ENCODE measurements at regions of chr19 and their contacts with region 1.

Region 1: DNA sequence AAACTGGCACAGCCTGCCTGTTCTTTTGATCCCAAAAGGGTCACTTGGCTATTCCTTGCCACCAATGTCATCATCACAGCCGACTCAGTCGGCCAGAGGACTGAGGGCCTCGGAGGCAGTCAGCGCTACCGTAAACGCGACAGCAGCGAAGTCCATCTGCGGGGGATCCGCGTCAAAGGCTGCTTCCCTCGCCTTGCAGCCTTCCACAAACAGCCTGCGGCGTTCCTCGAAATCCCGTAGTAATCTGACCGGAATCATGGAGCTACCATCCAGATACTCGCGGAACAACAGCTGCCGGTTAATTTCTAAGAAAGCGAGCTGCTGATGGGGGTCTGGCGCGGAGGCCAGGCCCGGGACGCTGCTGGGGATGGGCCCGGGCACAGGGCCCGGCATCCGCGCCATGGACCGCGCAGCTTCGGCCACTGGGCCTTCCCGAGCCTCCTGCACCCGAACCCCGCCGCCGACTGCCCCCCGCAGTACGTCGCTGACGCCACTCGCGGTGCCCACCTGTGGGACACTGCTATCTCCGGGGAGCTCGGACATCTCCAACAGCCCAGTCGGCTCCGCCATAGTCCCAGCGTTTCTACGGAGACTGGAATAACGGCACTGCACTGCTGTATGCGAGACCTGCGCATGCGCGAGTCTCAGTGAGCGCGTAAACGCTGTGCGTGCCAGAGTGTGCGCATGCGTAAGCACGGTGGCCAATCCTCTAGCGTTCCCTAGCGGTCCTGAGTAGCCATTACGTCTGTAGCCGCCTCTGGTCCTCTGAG is at the start of gene EID2B:
- DNase-seq: peak; percentile 93 to 95
- H3K4me3 ChIP-seq: peak within 1 kb of the TSS; percentile 72
- H3K4me3 Mint-ChIP-seq: peak within 1 kb of the TSS; percentile 77
- H3K27ac Mint-ChIP-seq: no peak within 1 kb of the TSS
- H3K4me1 ChIP-seq: no peaks in the 10 kb centered on the region
- H3K4me1 Mint-ChIP-seq: no peaks in the 10 kb centered on the region
- H3K27me3 ChIP-seq: no peaks in the 10 kb centered on the region
- H3K27me3 Mint-ChIP-seq: no peaks in the 10 kb centered on the region
- CTCF ChIP-seq: peak; percentile 96 to 98
- total RNA-seq, gene EID2B: 2.1 and 2.8 TPM in 2 replicates

Region 2: GRCh38 chr19:39474139-39474622 is 58.2 kb before region 1 on chr19:
- CTCF ChIA-PET with region 1: interaction called, 17 read pairs
- POLR2A ChIA-PET with region 1: no interaction called
- intact Hi-C with region 1: loop called (anchors 1 kb)
- DNase-seq: peak; percentile 73 to 88
- H3K4me3 ChIP-seq: no peak overlapping the region
- H3K4me3 Mint-ChIP-seq: no peak overlapping the region
- H3K27ac Mint-ChIP-seq: no peak overlapping the region
- H3K4me1 ChIP-seq: no peaks in the 10 kb centered on the region
- H3K4me1 Mint-ChIP-seq: no peaks in the 10 kb centered on the region
- H3K27me3 ChIP-seq: no peaks in the 10 kb centered on the region
- H3K27me3 Mint-ChIP-seq: no peaks in the 10 kb centered on the region
- CTCF ChIP-seq: peak; percentile 94 to 98

Region 3: DNA sequence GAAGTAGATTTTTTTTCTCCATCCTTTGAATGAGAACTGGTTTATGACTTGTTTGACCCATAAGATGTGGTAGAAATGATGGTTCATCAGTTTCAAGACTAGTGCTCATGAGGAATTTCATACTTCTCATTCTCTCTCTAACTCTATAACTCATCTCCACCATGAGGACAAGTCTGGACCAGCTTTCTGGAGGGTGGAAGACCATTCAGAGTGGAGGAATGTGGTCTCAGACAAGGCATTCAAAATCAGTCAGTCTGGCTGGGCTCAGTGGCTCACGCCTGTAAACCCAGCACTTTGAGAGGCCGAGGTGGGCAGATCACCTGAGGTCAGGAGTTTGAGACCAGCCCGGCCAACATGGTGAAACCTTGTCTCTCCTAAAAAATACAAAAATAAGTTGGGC is 11.1 kb after region 1 on chr19:
- CTCF ChIA-PET with region 1: no interaction called
- POLR2A ChIA-PET with region 1: no interaction called
- intact Hi-C with region 1: no loop called
- DNase-seq: no peak
- H3K4me3 ChIP-seq: no peak overlapping the region
- H3K4me3 Mint-ChIP-seq: no peak overlapping the region
- H3K27ac Mint-ChIP-seq: no peak overlapping the region
- H3K4me1 ChIP-seq: peaks cover 5% of the 10 kb centered on the region; the same call in 1 of the 2 replicates
- H3K4me1 Mint-ChIP-seq: peaks cover 8% of the 10 kb centered on the region
- H3K27me3 ChIP-seq: no peaks in the 10 kb centered on the region
- H3K27me3 Mint-ChIP-seq: peaks cover 14% of the 10 kb centered on the region
- CTCF ChIP-seq: no peak

Measured in Caco-2 (cell line).